ENCODE measurements at regions of chr1 and their contacts with region 1.

Region 1: GRCh38 chr1:18902523-18903290 is at the start of gene ALDH4A1:
- DNase-seq: peak; percentile 98 to 99
- ATAC-seq: peak; percentile 93 to 97
- H3K4me3 ChIP-seq: peak within 1 kb of the TSS; percentile 67 to 88 (median 80)
- H3K27ac ChIP-seq: peak within 1 kb of the TSS; percentile 89 to 98 (median 94)
- H3K4me1 ChIP-seq: peaks cover 28 to 36% of the 10 kb centered on the region in 2 donors
- H3K27me3 ChIP-seq: no peaks in the 10 kb centered on the region
- CTCF ChIP-seq: peak in 1 of 5 experiments; percentile 12
- POLR2A ChIP-seq: no peak
- total RNA-seq, gene ALDH4A1: 22.8 to 35.3 (median 31.4) TPM

Region 2: DNA sequence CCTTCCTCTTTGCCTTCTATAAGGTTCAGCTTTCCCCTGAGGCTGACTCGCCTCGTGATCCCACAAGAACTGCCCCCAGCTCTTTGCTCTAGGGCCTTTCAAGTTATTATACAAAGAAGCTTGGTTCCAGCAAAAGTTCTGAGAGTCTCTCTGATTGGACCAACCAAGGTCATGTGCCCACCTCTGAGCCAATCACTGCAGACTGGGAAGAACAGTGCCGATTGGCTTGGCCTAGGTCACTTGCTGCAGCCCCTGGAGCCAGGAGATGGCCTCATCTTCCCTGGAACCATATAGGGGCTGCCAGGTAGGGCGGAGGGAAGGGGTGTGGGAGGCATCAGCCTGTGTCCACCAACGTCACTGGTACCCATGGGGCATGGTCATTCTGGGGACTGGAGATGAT is 66.1 kb before region 1 on chr1:
- in situ Hi-C with region 1: no loop called
- intact Hi-C with region 1: no loop called
- DNase-seq: no peak
- ATAC-seq: no peak
- H3K4me3 ChIP-seq: no peak overlapping the region
- H3K27ac ChIP-seq: no peak overlapping the region
- H3K4me1 ChIP-seq: no peaks in the 10 kb centered on the region
- H3K27me3 ChIP-seq: peaks cover 0 to 13% (median 5%) of the 10 kb centered on the region in 3 donors
- CTCF ChIP-seq: no peak
- POLR2A ChIP-seq: no peak

Region 3: GRCh38 chr1:18956369-18957135 is 53.8 kb after region 1 on chr1 and contains the start of gene IFFO2:
- in situ Hi-C with region 1: no loop called
- intact Hi-C with region 1: loop called (anchors 1 kb)
- DNase-seq: peak; percentile 94
- ATAC-seq: peak; percentile 89 to 93
- H3K4me3 ChIP-seq: peak within 1 kb of the TSS; percentile 63 to 91 (median 76)
- H3K27ac ChIP-seq: peak within 1 kb of the TSS; percentile 41 to 81 (median 72)
- H3K4me1 ChIP-seq: peaks cover 18 to 30% of the 10 kb centered on the region in 2 donors
- H3K27me3 ChIP-seq: no peaks in the 10 kb centered on the region
- CTCF ChIP-seq: no peak
- POLR2A ChIP-seq: peak; percentile 86 to 92
- total RNA-seq, gene IFFO2: 2.1 to 16.3 (median 5.7) TPM

Region 4: DNA sequence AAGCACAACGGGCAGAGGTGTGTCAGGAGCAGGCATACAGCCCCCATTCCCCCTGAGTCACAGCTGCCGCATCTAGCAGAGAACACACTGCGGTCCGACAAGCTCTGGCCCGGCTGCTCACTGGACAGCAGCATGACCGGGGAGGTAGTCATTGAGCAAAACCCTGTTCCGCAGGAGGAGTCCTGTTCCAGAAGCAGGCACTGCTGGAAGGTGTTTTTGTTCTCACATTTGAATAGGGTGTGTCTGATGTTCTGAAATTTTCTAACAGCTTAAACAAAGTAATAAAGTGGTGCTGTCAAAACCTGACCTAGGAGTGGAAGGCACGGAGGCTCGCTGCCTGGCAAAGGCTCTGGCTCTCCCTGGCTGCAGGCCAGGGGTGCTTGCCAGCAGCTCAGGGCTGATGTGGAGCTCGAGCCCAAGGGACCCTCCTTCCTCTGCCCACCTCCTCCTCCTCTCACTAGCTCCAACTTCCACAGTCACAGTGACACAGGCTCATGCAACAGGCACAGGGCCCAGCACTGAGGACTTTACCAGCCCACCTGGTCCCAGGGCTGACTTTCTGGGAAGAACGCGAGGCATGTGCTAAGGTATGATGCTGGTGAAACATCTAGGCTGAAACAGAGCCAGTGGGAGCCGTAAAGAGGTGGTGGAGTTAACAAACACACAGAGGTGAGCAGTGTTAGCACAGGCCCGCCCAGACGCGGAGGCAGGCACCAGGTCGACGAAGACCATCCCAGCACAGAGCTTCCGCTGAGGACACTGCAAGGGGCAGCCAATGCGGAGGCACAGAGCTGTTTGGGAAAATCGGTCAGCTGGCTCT is 172.4 kb after region 1 on chr1:
- in situ Hi-C with region 1: loop called in 2 of 4 experiments (anchors 5 to 25 kb)
- intact Hi-C with region 1: loop called (anchors 5 kb)
- DNase-seq: peak; percentile 82 to 83
- ATAC-seq: peak; percentile 75 to 77
- H3K4me3 ChIP-seq: no peak overlapping the region
- H3K27ac ChIP-seq: peak overlapping the region; percentile 66 to 91 (median 79)
- H3K4me1 ChIP-seq: peaks cover 39 to 48% of the 10 kb centered on the region in 2 donors
- H3K27me3 ChIP-seq: no peaks in the 10 kb centered on the region
- CTCF ChIP-seq: no peak
- POLR2A ChIP-seq: peak in 1 of 2 donors; percentile 33

Region 5: GRCh38 chr1:19096036-19096833 is 193.5 kb after region 1 on chr1:
- in situ Hi-C with region 1: loop called in 3 of 4 experiments (anchors 5 to 25 kb)
- intact Hi-C with region 1: no loop called
- DNase-seq: no peak
- ATAC-seq: peak; percentile 43 to 76
- H3K4me3 ChIP-seq: no peak overlapping the region
- H3K27ac ChIP-seq: no peak overlapping the region
- H3K4me1 ChIP-seq: peaks cover 11 to 15% of the 10 kb centered on the region in 2 donors
- H3K27me3 ChIP-seq: no peaks in the 10 kb centered on the region
- CTCF ChIP-seq: peak; percentile 19 to 61 (median 50)
- POLR2A ChIP-seq: no peak